ENCODE measurements at regions of chr6 and their contacts with region 1.

Region 1: GRCh38 chr6:13336553-13336952 is 8.2 kb upstream of the TBC1D7 start:
- DNase-seq: peak; percentile 89
- ATAC-seq: peak; percentile 74

Region 2: DNA sequence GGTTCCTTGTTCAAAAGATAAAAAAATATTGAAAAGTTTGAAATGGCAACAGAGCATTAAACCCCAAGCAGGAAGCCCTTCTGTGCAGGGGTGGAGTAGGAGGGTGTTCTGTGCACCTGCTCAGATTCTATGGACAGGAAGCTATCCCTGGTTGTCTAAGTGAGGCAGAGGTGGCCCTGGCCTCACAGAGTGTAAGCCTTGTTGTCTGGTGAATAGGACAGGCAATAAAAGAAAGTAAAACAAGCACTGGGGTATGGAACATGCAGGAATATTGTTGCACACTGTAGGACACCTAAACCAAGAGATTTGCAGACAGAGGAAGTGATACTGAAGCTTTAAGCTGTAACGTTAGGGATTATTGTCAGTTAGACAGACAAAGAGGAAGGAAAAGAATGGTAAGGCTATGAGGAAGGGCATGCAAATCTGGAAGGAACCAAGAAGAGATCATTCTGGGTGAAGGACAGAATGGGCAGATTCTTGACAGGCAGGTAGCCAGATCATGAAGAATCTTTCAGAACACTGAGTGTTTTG is 75.0 kb before region 1 on chr6:
- intact Hi-C with region 1: no loop called
- DNase-seq: no peak
- ATAC-seq: peak; percentile 46

Region 3: DNA sequence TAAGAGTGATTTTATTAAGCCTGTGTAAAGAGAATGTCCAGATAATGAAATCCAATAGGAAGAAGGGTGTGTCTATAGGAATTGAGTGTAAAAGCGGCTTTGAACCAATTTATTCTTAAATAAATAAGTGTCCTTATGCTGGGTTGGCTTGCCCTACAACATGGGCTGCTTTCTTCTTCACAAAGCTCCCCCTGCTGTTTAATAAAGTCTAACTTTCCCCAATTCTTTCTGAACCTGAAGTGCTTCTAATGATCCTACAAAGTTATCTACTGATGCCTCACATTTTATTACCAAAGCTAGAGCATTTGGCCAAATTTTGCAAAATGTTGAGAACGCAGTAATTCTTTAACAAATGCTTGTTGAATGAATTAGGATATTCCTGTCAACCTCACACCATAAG is 201.5 kb after region 1 on chr6:
- intact Hi-C with region 1: loop called (anchors 5 kb)
- DNase-seq: no peak
- ATAC-seq: peak; percentile 81